Spleen (tissue), 13 donors: ENCODE measurements at regions of chr9 and their contacts with region 1.

Region 1: DNA sequence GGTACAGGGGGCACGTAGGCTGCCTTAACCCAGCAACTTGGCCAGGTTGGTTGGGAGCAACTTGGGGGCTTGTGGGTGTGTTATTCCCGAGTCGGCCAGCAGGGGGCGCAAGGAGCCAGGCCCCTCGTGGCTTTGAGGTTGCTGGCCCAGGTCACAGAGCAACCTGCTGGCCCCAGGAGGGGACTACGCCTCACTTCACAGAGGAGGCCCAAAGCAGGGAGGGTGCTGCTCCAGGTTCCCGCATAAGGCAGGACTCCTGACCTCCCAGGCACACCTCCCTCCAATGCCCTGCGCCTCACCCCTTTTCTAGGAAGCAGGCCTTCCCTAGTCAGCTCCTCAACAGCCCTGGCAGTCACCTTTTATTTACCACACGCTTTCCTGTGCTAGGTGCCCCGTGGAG is 18.1 kb downstream of the KYAT1 start:
- DNase-seq: peak; percentile 94
- H3K4me3 ChIP-seq: no peak overlapping the region
- H3K27ac ChIP-seq: no peak overlapping the region
- H3K4me1 ChIP-seq: peaks cover 0 to 14% (median 7%) of the 10 kb centered on the region in 6 donors
- H3K27me3 ChIP-seq: no peaks in the 10 kb centered on the region
- CTCF ChIP-seq: peak; percentile 85 to 98 (median 95)
- POLR2A ChIP-seq: no peak

Region 2: DNA sequence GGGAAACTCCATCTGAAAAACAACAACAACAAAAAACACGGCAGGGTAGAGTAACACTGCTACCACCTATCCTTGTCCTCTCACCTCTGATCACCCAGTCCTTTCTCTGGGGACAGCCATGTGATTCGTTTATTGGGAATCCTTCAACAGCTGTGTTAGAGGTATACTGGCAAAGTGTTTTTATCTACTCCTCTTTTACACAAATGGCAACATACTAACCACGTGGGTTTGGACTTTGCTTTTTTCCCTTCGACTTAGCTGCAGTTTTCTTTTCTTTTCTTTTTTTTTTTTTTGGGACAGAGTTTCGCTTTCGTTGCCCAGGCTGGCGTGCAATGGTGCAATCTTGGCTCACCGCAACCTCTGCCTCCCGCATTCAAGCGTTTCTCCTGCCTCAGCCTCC is 185.9 kb before region 1 on chr9:
- intact Hi-C with region 1: no loop called
- DNase-seq: no peak
- H3K4me3 ChIP-seq: no peak overlapping the region
- H3K27ac ChIP-seq: no peak overlapping the region
- H3K4me1 ChIP-seq: peaks cover 0 to 22% (median 7%) of the 10 kb centered on the region in 6 donors
- H3K27me3 ChIP-seq: no peaks in the 10 kb centered on the region
- CTCF ChIP-seq: no peak
- POLR2A ChIP-seq: no peak

Region 3: GRCh38 chr9:128927731-128928411 is 64.2 kb after region 1 on chr9:
- intact Hi-C with region 1: loop called (anchors 2 kb)
- DNase-seq: no peak
- H3K4me3 ChIP-seq: no peak overlapping the region
- H3K27ac ChIP-seq: no peak overlapping the region
- H3K4me1 ChIP-seq: peaks cover 5 to 20% (median 9%) of the 10 kb centered on the region in 6 donors
- H3K27me3 ChIP-seq: no peaks in the 10 kb centered on the region
- CTCF ChIP-seq: peak; percentile 56 to 95 (median 88)
- POLR2A ChIP-seq: no peak